ENCODE measurements at regions of chr3 and their contacts with region 1.

Region 1: GRCh38 chr3:57068437-57069089 is 8.1 kb downstream of the SPATA12 start:
- DNase-seq: peak; percentile 52
- ATAC-seq: peak; percentile 97
- H3K4me3 Mint-ChIP-seq: peak overlapping the region; percentile 62
- H3K27ac Mint-ChIP-seq: peak overlapping the region; percentile 88
- H3K4me1 Mint-ChIP-seq: peaks cover 27% of the 10 kb centered on the region
- H3K27me3 Mint-ChIP-seq: peaks cover 22% of the 10 kb centered on the region
- CTCF ChIP-seq: no peak

Region 2: DNA sequence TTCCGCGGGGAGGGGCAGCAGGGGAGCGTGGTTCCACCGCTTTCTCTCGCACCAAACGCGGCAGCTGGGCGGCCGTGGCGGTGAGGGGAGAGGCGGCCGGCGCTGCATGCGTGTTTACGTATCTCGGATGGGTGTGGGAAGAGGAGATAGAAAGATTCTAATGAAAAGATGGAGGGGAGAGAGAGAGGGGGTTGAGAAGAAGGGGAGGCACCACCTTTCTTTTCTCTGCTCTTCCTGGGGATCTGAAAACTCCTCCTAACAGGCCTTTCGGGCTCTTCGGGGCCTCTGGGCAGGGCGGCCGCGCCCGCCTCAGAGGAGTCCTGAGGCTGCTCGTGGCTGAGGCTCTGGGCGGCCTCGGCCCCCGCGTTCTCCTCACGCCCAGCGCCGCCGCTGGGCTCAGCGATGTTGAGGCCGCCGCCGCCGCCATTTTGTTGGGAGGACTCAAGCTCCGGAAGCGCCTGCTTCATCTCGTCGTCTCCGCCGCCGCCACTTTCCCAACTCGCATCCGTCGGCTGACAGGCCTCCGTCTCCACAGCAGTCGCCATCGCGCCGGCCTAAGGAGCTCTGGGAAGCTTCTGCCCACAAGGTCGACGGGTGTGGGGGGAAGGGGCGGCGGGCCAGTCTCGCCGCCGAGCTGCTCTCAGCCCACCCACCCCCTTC is 386.0 kb before region 1 on chr3:
- CTCF ChIA-PET with region 1: no interaction called
- POLR2A ChIA-PET with region 1: interaction called, 7 read pairs
- intact Hi-C with region 1: loop called (anchors 5 kb)
- DNase-seq: peak; percentile 76
- ATAC-seq: peak; percentile 73
- H3K4me3 Mint-ChIP-seq: peak overlapping the region; percentile 97
- H3K27ac Mint-ChIP-seq: peak overlapping the region; percentile 97
- H3K4me1 Mint-ChIP-seq: peaks cover 49% of the 10 kb centered on the region
- H3K27me3 Mint-ChIP-seq: no peaks in the 10 kb centered on the region
- CTCF ChIP-seq: no peak

Region 3: GRCh38 chr3:57019057-57019456 is 49.5 kb before region 1 on chr3:
- CTCF ChIA-PET with region 1: no interaction called
- POLR2A ChIA-PET with region 1: interaction called, 5 read pairs
- intact Hi-C with region 1: loop called (anchors 1 kb)
- DNase-seq: peak; percentile 18
- ATAC-seq: peak; percentile 97
- H3K4me3 Mint-ChIP-seq: peak overlapping the region; percentile 64
- H3K27ac Mint-ChIP-seq: peak overlapping the region; percentile 65
- H3K4me1 Mint-ChIP-seq: peaks cover 24% of the 10 kb centered on the region
- H3K27me3 Mint-ChIP-seq: peaks cover 5% of the 10 kb centered on the region
- CTCF ChIP-seq: no peak

Region 4: DNA sequence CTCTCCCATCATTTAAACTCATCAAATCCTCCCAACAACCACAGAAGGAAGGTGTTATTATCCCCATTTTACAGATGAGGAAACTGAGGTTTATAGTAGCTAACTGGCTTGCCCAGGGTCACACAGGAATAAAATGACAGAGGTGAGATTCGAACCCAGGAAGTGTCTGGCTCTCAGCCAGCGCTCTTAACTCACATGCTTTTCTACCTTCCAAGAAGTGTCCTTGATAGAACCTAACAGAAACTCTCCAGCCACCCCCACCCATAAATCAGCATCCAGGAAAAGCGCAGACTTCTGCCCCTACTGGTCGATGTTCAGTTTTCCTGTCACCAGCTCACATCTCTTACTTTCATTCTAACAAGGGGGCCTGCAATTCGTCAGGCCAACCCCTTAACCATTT is 43.6 kb after region 1 on chr3:
- CTCF ChIA-PET with region 1: no interaction called
- POLR2A ChIA-PET with region 1: no interaction called
- intact Hi-C with region 1: no loop called
- DNase-seq: no peak
- ATAC-seq: no peak
- H3K4me3 Mint-ChIP-seq: no peak overlapping the region
- H3K27ac Mint-ChIP-seq: no peak overlapping the region
- H3K4me1 Mint-ChIP-seq: no peaks in the 10 kb centered on the region
- H3K27me3 Mint-ChIP-seq: peaks cover 10% of the 10 kb centered on the region
- CTCF ChIP-seq: no peak

Region 5: GRCh38 chr3:57675530-57675929 is 607.0 kb after region 1 on chr3:
- CTCF ChIA-PET with region 1: no interaction called
- POLR2A ChIA-PET with region 1: no interaction called
- intact Hi-C with region 1: loop called (anchors 1 kb)
- DNase-seq: no peak
- ATAC-seq: peak; percentile 25
- H3K4me3 Mint-ChIP-seq: no peak overlapping the region
- H3K27ac Mint-ChIP-seq: peak overlapping the region; percentile 82
- H3K4me1 Mint-ChIP-seq: peaks cover 49% of the 10 kb centered on the region
- H3K27me3 Mint-ChIP-seq: no peaks in the 10 kb centered on the region
- CTCF ChIP-seq: no peak

Region 6: GRCh38 chr3:58366699-58367098 is 1298.1 kb after region 1 on chr3:
- CTCF ChIA-PET with region 1: no interaction called
- POLR2A ChIA-PET with region 1: no interaction called
- intact Hi-C with region 1: no loop called
- DNase-seq: no peak
- ATAC-seq: no peak
- H3K4me3 Mint-ChIP-seq: no peak overlapping the region
- H3K27ac Mint-ChIP-seq: peak overlapping the region; percentile 59
- H3K4me1 Mint-ChIP-seq: peaks cover 59% of the 10 kb centered on the region
- H3K27me3 Mint-ChIP-seq: no peaks in the 10 kb centered on the region
- CTCF ChIP-seq: no peak

Measured in activated B cell treated with CpG ODN at 0.5 μM for 24 hours (primary cell).